SK-N-SH (cell line): ENCODE measurements at regions of chr12 and their contacts with region 1.

Region 1: GRCh38 chr12:34121360-34121759 is 99.1 kb downstream of the ALG10 start:
- DNase-seq: no peak
- H3K4me3 ChIP-seq: no peak overlapping the region
- H3K27ac ChIP-seq: no peak overlapping the region
- H3K4me1 ChIP-seq: no peaks in the 10 kb centered on the region
- H3K27me3 ChIP-seq: peaks cover 9% of the 10 kb centered on the region; the same call in 1 of the 2 replicates
- CTCF ChIP-seq: no peak
- EP300 ChIP-seq: no peak
- RAD21 ChIP-seq: no peak

Region 2: DNA sequence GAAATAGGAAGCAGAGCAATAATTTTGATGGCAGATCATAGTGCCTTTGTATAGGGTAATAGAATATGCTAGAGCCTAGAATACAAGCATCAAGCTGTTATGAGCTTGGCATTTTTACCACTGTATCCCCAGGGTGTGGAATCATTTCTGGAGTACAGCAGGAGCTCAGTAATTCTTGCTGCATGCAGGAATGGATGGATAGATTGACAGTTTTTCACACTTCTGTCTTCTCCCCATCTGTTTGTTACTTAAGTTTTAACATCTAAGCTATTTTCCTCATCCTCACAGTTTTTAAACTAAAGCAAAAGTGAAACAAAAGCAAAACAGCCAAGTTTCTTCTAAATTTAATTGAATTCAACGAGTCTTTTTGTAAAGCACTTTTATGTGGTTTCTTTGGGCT is 66.4 kb before region 1 on chr12:
- CTCF ChIA-PET with region 1: no interaction called
- POLR2A ChIA-PET with region 1: no interaction called
- DNase-seq: no peak
- H3K4me3 ChIP-seq: no peak overlapping the region
- H3K27ac ChIP-seq: no peak overlapping the region
- H3K4me1 ChIP-seq: no peaks in the 10 kb centered on the region
- H3K27me3 ChIP-seq: no peaks in the 10 kb centered on the region
- CTCF ChIP-seq: no peak
- EP300 ChIP-seq: no peak
- RAD21 ChIP-seq: no peak

Region 3: DNA sequence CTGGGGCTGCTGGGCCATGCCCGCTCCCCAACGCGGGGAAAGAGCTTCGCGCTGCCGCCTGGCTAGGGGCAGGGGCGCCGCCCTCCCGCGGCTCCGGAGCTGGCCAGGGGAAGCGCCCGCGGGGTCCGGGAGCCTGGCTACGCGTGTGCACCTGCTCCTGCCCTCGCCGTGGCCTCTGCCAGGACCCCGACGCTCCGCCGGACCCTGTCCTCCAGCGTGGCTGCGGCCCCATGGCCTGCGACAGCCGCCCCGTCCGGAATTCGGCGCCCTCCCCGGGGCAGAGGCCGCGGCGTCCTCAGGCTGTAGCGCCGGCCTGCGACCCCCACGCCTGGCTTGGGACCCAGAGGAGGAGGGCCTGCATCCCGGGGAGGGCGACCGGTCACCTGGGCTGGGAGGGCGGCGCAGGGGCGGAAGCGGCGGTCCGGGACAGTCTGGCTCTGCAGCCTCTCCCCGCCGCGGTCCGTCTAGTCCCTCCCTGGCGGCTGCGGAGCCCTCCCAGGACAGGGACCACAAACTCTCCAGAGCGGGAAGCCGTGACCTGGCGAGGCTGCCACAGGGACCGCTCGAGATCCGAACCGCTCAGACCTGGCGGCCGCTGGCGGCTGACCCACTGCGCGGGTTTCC is 13.5 kb before region 1 on chr12:
- CTCF ChIA-PET with region 1: interaction called, 12 read pairs
- POLR2A ChIA-PET with region 1: no interaction called
- DNase-seq: no peak
- H3K4me3 ChIP-seq: no peak overlapping the region
- H3K27ac ChIP-seq: no peak overlapping the region
- H3K4me1 ChIP-seq: no peaks in the 10 kb centered on the region
- H3K27me3 ChIP-seq: peaks cover 30% of the 10 kb centered on the region
- CTCF ChIP-seq: no peak
- EP300 ChIP-seq: no peak
- RAD21 ChIP-seq: no peak

Region 4: GRCh38 chr12:34133156-34133555 is 11.8 kb after region 1 on chr12:
- CTCF ChIA-PET with region 1: interaction called, 23 read pairs
- POLR2A ChIA-PET with region 1: no interaction called
- DNase-seq: no peak
- H3K4me3 ChIP-seq: no peak overlapping the region
- H3K27ac ChIP-seq: no peak overlapping the region
- H3K4me1 ChIP-seq: no peaks in the 10 kb centered on the region
- H3K27me3 ChIP-seq: no peaks in the 10 kb centered on the region
- CTCF ChIP-seq: no peak
- EP300 ChIP-seq: no peak
- RAD21 ChIP-seq: no peak

Region 5: DNA sequence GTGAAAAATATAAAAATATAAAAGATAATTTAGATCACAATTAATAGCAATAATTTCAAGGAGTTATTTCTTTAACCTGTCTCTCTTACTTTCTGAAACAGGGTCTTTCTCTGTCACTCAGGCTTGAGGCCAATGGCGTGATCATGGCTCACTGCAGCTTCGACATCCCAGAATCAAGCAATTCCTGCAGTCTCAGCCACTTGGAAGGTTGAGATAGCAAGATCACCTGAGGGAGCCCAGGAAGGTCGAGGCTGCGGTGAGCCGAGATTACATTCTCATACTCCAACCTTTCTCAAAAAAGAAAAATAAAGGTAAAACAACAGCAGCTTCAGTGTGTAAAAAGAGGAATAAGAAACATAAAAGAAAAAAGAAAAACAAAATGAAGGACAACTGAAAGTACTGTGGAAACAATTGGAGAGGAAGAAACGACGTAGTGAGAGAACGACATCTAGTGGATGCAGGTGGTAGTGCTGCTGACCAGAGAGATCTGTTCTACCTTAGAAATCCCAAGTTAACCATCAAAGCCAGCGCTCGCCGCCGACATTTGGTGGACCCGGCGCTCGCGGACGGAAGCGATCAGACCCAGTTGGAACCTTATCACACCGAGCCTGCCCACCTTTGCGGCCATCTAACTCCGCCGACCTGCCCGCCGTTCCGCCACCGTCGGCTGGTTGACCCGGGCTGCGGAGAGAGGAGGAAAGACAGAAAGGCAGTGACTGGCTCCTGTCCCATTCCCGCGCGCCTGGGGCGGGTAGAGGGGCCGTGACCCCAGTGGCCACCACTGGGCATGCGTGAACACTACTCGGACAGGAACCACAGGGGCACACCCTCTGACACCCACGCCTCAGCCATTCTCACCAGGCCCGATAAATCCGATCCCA is 97.0 kb after region 1 on chr12:
- CTCF ChIA-PET with region 1: interaction called, 15 read pairs
- POLR2A ChIA-PET with region 1: no interaction called
- DNase-seq: peak; percentile 77
- H3K4me3 ChIP-seq: peak overlapping the region; percentile 51 to 68
- H3K27ac ChIP-seq: no peak overlapping the region
- H3K4me1 ChIP-seq: peaks cover 0 to 4% of the 10 kb centered on the region in 2 experiments; a peak in 1 of 4 replicates
- H3K27me3 ChIP-seq: peaks cover 6% of the 10 kb centered on the region; the same call in 1 of the 2 replicates
- CTCF ChIP-seq: peak; percentile 93
- EP300 ChIP-seq: no peak
- RAD21 ChIP-seq: peak; percentile 77

Region 6: DNA sequence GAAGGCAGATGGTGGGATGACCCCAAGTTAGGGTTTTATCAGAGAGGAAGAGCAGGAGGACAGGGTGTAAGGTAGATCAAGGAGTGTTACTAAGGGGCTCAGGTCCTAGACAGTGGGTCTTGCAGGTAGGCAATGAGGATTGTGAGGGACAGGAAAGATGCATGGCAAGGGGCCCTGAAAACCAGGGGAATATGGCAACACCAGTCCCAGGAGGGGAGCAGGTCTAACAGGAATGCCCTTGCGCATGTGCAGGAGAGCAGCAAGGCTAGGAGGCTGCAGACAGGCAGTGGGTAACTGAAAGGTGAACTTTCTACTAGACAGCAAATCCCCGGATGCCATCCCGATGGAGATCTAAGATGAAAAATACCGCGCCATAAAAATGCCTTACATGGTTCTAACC is 112.3 kb after region 1 on chr12:
- CTCF ChIA-PET with region 1: interaction called, 10 read pairs
- POLR2A ChIA-PET with region 1: no interaction called
- DNase-seq: no peak
- H3K4me3 ChIP-seq: no peak overlapping the region
- H3K27ac ChIP-seq: no peak overlapping the region
- H3K4me1 ChIP-seq: no peaks in the 10 kb centered on the region
- H3K27me3 ChIP-seq: no peaks in the 10 kb centered on the region
- CTCF ChIP-seq: no peak
- EP300 ChIP-seq: no peak
- RAD21 ChIP-seq: no peak